AG04450 (cell line): ENCODE measurements at regions of chr9 and their contacts with region 1.

Region 1: DNA sequence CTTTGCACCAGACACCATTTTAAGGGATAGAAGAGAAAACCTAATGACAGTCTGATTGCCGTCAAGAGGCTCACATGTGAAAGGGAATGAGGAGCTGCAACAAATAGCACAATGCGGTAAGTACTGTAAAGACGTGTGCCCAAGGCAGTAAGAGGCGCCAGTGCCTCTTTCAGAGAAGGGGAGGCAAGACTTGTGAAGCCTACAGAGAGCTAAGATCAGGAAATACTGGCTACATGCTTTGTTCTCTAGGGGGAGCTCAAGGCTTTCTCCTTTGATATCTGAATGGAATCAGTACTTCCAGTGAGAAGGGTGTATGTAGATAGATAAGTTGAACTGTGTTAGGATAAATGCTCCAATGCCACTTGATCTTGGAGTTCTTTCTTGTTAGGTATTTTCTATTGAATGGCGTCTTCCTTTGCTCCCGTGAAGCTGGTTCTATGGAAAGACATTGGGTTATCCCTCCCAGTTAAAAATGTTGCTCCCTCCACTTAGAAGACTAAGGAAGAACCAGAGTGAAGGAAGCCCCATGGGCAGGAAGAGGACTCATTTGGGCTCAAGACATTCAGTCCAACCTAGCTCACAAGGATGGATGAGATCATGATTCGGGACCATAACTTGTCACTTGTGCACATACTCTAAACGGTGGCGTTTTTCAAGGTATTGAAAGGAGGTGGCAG is 23.5 kb upstream of the ALDOB start:
- DNase-seq: peak; percentile 56
- H3K4me3 ChIP-seq: no peak overlapping the region
- H3K27ac ChIP-seq: no peak overlapping the region
- H3K27me3 ChIP-seq: no peaks in the 10 kb centered on the region
- CTCF ChIP-seq: peak; percentile 94

Region 2: GRCh38 chr9:101479338-101480030 is 20.4 kb after region 1 on chr9:
- CTCF ChIA-PET with region 1: interaction called, 93 read pairs
- POLR2A ChIA-PET with region 1: no interaction called
- DNase-seq: no peak
- H3K4me3 ChIP-seq: no peak overlapping the region
- H3K27ac ChIP-seq: no peak overlapping the region
- H3K27me3 ChIP-seq: no peaks in the 10 kb centered on the region
- CTCF ChIP-seq: no peak

Region 3: DNA sequence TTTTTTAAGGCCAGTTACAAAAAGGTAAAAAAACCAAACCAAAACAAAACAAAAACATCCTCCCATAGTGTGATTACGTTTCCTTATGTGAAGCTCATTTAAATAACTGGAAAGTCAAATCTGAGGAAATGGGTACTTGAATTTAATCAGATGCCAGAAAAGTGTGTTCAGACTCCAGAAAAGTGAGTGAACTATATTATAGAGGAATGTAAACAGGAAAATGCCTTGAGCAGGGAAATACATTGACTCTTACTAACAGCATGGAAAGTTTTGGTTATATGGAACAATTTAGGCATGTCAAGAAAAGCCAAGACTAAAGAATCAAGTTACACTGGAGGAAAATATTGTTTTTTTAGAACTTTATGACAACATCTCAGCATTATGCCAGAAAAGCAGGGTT is 36.7 kb after region 1 on chr9:
- CTCF ChIA-PET with region 1: interaction called, 24 read pairs
- POLR2A ChIA-PET with region 1: no interaction called
- DNase-seq: no peak
- H3K4me3 ChIP-seq: no peak overlapping the region
- H3K27ac ChIP-seq: no peak overlapping the region
- H3K27me3 ChIP-seq: no peaks in the 10 kb centered on the region
- CTCF ChIP-seq: no peak

Region 4: DNA sequence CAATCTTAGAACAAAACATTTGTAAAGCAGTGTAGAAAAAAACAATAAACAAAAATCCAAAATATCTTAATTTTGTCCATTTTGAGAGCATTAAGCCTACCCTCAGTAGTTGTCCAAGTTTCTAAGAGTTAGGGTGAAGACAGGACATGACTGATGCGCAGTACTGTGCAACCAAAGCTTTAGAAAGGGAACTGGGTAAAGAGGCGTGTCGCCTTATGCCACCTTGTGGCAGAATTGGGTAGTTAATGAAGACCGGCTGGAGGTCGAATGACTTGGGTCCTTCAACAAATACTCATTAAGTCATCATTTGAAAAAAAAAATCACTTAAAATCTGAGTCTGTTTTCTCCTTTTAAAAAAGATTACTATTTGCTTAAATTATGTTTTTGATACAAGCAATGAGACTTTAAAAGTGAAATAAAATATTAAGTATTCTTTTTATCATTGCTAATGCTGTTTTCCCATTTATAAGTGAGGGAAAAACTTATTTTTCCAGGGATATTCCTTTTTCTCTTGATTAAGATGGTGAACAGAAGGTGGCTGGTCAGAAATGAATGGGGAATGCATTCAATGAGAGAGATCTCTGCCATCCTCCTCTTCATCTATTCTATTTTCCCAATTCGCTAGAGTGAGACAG is 71.1 kb after region 1 on chr9:
- CTCF ChIA-PET with region 1: interaction called, 600 read pairs
- POLR2A ChIA-PET with region 1: interaction called, 5 read pairs
- DNase-seq: peak; percentile 63
- H3K4me3 ChIP-seq: no peak overlapping the region
- H3K27ac ChIP-seq: no peak overlapping the region
- H3K27me3 ChIP-seq: no peaks in the 10 kb centered on the region
- CTCF ChIP-seq: peak; percentile 89

Region 5: GRCh38 chr9:101566904-101567724 is 108.0 kb after region 1 on chr9:
- CTCF ChIA-PET with region 1: interaction called, 42 read pairs
- POLR2A ChIA-PET with region 1: no interaction called
- DNase-seq: no peak
- H3K4me3 ChIP-seq: no peak overlapping the region
- H3K27ac ChIP-seq: no peak overlapping the region
- H3K27me3 ChIP-seq: no peaks in the 10 kb centered on the region
- CTCF ChIP-seq: peak; percentile 68

Region 6: DNA sequence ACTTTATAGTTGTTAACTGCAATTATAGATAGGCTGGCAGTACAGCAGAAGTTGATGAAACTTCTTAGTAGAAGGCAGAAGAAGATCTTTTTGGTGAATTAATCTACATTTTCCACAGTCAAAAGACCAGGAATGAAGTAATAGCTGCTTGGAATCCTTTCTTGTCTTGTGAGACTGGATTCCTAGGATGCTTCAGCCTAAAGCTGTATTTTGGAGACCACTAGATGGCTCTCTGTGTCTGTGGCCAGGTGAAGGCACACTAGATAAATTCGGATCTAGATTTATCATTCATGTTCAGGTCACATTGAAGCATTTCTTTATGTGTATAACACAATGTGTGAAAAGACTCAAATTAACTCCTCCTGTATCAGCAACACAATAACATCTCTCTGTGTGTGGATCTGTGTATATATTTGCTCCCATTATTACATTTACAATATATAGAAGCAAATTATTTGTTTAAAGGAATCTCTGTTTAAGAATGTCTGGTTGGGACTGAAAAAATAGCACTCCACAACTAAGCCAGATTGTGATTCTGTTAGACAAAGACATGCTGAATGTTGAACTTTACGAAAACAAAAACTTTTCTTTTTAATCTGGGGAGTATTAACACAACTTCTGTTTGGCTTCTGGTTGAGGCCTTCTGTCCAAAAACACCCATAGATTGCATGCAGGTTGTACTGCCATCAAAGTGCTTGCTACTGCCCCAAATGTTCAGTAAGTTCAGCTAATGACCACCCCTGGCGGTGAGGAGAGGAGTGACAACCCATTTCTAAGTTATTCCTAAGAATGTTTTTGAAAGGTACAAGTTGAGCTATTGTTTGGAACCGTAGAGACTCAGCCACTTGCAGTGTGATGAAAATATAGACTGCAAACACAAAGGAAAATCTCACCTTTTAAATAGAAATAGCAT is 268.8 kb after region 1 on chr9:
- CTCF ChIA-PET with region 1: no interaction called
- POLR2A ChIA-PET with region 1: no interaction called
- DNase-seq: no peak
- H3K4me3 ChIP-seq: no peak overlapping the region
- H3K27ac ChIP-seq: no peak overlapping the region
- H3K27me3 ChIP-seq: no peaks in the 10 kb centered on the region
- CTCF ChIP-seq: peak; percentile 56